ENCODE measurements at regions of chr1 and their contacts with region 1.

Region 1: DNA sequence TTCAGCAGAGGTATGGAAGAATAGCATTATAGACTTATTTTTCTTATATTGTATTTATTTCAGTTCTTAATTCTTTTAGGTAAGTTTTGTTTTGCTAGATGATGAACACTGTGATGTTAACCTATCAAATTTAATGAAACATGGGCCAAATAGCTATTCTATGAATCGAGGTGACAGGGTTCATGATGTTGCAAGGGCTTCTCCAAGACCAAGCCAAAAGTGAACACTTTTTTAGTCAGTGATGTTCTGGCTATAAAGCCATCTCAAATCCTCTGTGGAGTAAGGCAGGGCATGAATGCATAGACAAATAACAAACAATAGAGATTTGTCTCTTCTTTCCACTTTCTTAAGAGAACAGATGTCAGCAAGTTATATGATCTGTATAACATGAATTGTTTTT is 26.7 kb downstream of the C1orf146 start:
- DNase-seq: no peak
- H3K4me3 ChIP-seq: no peak overlapping the region
- H3K27ac ChIP-seq: no peak overlapping the region
- H3K4me1 ChIP-seq: no peaks in the 10 kb centered on the region
- H3K27me3 ChIP-seq: no peaks in the 10 kb centered on the region
- CTCF ChIP-seq: no peak

Region 2: DNA sequence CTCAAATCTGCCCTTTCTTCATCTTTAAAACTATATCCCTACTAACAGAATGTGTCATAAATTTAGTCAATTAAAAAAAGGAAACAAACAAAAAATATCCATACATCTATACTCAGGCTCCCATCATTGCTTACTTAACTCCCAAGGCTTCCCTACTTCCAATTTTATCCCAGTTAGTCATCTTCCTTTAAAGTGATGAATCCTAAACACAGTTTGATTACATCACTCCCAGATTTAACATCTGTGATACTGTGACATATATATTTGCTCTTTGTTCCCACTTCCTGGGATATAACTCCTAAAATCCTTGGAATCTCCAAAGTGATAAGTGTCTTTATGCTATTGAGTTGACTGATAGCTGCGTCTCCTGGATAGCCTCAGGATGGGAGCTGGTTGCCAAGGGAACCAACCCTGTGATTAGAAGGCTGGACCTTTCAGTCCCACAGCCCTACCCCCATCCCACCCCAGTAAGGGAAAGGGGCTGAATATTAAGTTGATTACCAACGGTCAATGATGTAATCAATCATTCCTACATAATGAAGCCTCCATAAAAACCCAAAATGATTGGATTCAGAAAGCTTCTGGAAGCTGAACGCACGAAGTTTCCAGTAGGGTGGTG is 32.8 kb after region 1 on chr1:
- CTCF ChIA-PET with region 1: interaction called, 10 read pairs
- POLR2A ChIA-PET with region 1: no interaction called
- intact Hi-C with region 1: no loop called
- DNase-seq: peak in 1 of 2 experiments; percentile 33
- H3K4me3 ChIP-seq: no peak overlapping the region
- H3K27ac ChIP-seq: no peak overlapping the region
- H3K4me1 ChIP-seq: no peaks in the 10 kb centered on the region
- H3K27me3 ChIP-seq: no peaks in the 10 kb centered on the region
- CTCF ChIP-seq: no peak

Region 3: GRCh38 chr1:93123201-93123783 is 878.9 kb after region 1 on chr1:
- CTCF ChIA-PET with region 1: interaction called, 12 read pairs
- POLR2A ChIA-PET with region 1: no interaction called
- intact Hi-C with region 1: no loop called
- DNase-seq: no peak
- H3K4me3 ChIP-seq: no peak overlapping the region
- H3K27ac ChIP-seq: no peak overlapping the region
- H3K4me1 ChIP-seq: no peaks in the 10 kb centered on the region
- H3K27me3 ChIP-seq: no peaks in the 10 kb centered on the region
- CTCF ChIP-seq: no peak